ENCODE measurements at regions of chr2 and their contacts with region 1.

Region 1: DNA sequence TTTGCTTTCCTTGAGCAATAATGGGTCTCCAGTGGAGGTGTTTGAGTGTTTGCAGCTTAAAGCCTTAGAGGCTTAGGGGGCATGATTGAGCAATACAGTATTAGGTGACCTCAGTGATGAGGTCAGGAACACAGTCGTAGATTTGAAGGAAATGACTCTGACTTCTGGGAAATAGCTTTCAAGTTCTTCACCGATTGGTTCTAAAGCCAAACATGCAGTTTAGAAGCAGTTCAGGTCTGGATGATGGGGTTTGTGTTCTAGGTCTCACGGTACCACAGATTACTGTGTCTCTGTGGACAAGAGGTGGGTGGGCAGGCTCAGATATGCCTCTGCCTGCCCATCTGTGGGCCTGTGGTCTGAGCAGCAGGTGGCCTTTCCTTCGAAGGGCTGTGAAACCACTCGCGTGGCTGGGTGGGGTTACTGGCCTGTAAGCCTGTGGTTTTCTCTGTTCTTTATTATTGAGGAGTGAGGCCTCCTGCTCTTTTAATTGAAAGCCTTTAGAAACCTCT is 7.8 kb downstream of the MTHFD2 start:
- DNase-seq: peak; percentile 76 to 85 (median 82)
- H3K4me3 ChIP-seq: peak overlapping the region in 3 of 7 experiments; percentile 2 to 43 (median 10)
- H3K27ac ChIP-seq: peak overlapping the region in 1 of 2 experiments; percentile 73
- H3K4me1 ChIP-seq: peaks cover 14 to 31% (median 26%) of the 10 kb centered on the region in 4 experiments
- H3K27me3 ChIP-seq: no peaks in the 10 kb centered on the region

Region 2: DNA sequence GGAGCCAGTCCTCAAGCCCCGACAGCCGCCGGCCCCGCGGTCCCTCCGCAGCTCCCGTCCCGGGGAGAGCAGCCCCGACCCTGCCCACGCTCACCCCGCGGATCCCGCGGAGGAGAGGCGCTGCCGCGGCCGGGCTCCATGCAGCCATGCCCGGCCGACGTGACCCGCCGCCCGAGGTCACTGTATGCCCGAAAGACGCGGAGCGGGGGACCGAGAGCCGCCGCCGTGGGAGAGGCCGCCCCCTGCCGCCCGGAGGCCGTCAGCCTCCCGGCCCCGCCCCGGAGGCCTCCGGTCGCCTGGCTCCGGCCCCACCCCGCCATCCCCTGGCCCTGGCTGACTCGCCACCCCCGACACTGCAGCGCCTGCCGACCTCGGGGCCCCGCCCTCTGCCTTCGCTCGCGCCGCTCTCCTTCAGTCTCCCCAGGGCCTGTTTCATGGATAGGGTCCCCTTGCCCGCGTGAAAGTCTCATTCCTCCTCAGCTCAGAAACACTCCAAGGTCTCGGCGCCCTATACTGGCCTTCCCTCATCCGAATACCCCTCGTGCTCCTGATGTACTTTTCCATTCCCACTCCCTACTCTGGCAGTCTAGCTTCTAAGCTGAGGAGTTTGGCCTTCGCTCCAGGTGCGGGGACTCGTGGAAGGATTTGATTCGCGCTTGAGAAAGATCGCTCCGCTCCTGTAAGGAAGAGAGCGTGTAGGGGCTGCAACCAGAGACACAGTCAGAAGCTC is 58.3 kb before region 1 on chr2 and contains the start of gene BOLA3:
- CTCF ChIA-PET with region 1: interaction called, 16 read pairs
- POLR2A ChIA-PET with region 1: no interaction called
- DNase-seq: peak; percentile 79 to 90 (median 87)
- H3K4me3 ChIP-seq: peak within 1 kb of the TSS; percentile 71 to 94 (median 84)
- H3K27ac ChIP-seq: peak within 1 kb of the TSS in 1 of 2 experiments; percentile 73
- H3K4me1 ChIP-seq: peaks cover 7 to 31% (median 21%) of the 10 kb centered on the region in 4 experiments
- H3K27me3 ChIP-seq: no peaks in the 10 kb centered on the region

Region 3: DNA sequence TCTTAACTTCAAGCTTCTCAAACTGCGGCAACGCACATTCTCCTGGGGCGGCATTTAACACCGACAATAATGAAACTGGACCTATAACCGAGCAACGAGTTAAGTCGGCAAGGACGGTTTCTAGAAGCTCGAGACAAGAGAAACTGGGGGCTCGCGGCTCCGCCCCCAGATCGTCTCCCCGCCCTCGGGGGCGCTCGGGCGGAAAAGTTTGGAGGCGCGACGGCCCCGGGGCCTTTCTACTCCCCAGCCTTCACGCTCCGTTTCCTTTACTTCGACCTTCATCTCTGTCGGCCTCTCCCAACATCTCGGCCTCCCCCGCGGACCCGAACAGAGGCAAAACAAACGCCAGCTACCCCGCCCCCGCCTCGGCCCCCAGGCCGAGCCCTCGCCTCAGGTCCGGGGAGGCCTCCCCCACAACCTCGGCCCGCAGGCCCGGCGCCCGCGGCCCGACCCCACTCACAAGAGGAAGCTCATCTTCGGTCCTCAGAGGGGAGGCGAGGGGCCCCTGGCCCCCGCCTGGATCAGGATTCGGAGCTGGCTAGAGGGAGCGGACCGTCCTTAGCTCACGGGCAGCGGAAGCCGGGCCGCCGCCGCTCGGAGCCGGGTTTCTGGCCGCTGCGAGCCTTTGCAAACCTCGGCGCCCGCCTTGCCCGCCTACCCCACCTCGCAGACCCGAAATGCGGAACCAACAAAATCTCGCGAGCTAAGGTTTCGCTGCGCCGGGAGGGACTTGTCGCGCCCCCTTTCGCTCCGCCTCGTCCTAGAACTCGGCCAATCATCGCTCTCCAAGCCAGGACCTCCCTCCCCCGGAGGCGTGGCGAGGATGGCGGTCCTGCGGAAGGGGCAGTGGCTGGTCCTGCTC is 27.8 kb before region 1 on chr2 and contains the start of gene MOB1A:
- CTCF ChIA-PET with region 1: interaction called, 39 read pairs
- POLR2A ChIA-PET with region 1: interaction called, 4 read pairs
- DNase-seq: peak; percentile 99
- H3K4me3 ChIP-seq: peak within 1 kb of the TSS; percentile 84 to 97 (median 91)
- H3K27ac ChIP-seq: peak within 1 kb of the TSS; percentile 96 to 98
- H3K4me1 ChIP-seq: peaks cover 14 to 37% (median 24%) of the 10 kb centered on the region in 4 experiments
- H3K27me3 ChIP-seq: no peaks in the 10 kb centered on the region